WTC11 (cell line): ENCODE measurements at regions of chr5 and their contacts with region 1.

Region 1: DNA sequence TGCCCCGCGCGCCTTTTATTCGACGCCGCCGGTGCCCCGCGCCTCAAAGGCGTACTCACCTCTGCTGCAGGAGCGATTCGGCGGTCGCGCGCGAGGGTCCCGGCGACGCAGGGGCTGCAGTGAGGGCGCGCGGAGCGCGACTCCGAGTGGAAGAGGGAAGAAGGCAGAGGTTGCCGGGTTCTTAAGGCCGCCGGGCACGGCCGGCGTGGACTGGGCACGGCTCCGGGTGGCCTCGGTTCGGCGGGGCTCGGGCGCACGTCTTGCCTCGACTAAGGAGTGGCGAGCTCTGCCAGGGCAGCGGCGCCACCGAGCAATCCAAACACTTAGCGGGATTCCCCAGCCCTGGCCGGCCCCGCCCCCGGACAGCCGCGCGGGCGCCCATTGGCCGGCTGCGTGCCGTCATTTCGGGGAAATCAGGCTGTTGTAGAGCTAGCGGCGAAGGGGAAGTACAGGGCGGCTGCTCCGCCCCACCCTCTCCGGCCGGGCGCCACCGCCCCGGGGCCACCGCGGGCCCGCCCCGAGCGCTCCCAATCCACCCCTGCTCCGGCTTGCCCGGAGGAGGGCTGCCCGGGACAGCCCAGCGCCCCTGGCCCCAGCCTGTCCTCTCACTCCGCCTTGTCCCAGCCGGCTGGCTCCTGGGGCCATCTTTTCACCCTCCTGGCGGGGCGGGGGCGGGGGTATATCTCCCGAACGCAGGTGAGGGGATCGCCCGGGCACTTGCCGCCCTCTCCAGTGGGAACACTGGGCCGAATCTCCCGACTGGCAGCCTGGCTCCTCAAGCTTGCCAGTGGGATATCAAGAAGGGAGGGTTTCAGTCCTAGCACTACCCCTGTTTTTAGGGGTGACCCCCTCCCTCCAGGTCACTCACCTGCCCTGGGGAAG is at the start of gene IRF1:
- DNase-seq: peak; percentile 93
- ATAC-seq: peak; percentile 89
- H3K4me3 Mint-ChIP-seq: peak within 1 kb of the TSS; percentile 83
- H3K27ac Mint-ChIP-seq: no peak within 1 kb of the TSS
- H3K4me1 Mint-ChIP-seq: peaks cover 27% of the 10 kb centered on the region
- H3K27me3 Mint-ChIP-seq: peaks cover 33% of the 10 kb centered on the region
- CTCF ChIP-seq: no peak
- total RNA-seq, gene IRF1: 8.8 to 9.8 TPM (median 9.4 TPM) in 3 replicates

Region 2: DNA sequence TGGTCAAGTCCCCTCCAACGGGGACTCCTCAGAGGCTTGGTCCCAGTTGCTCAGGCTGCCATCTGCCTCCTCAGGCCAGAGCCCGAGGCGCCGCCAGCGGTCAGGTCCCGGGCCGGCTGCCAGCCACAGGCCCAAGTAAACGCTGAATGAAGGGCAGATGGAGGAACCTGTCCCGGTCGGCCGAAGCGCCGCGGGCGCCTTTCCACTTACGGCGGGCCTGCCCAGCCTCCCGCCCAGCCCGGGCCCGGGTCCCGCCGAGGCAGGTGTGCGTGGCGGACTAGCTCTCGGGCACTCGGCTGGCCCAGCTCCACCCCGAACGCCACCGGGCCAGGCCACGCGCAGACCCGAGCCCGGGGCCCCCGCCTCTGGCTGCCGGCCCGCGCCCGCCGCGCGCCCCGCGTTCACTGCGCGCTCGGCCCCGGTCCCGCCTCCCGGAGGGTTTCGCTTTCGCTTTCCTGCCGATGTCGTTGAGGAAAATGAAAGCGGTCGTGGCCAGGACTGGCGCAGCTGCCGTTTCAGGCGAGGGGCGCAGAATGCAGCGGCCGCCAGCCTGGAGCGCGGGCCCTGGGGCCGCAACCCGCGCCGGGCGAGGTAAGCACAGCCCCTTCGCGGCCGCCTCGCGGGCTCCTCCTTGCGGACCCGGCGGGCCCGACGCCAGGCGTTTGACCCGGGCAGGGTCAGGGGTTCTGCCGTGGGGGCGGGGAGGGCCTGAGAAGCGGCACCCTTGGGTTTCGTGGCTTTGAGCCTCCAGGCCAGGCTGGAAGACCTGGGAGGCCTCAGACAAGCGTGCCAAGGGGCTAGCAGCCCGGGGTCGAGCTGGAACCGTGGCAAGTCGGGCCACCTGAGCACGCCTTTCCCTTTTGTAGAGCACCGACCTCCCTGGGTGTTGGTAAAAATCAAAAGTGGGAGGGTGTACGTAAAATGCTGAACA is 80.0 kb before region 1 on chr5:
- CTCF ChIA-PET with region 1: interaction called, 18 read pairs
- POLR2A ChIA-PET with region 1: interaction called, 3 read pairs
- DNase-seq: peak; percentile 88
- ATAC-seq: peak; percentile 98
- H3K4me3 Mint-ChIP-seq: peak overlapping the region; percentile 70
- H3K27ac Mint-ChIP-seq: peak overlapping the region; percentile 44
- H3K4me1 Mint-ChIP-seq: peaks cover 8% of the 10 kb centered on the region
- H3K27me3 Mint-ChIP-seq: peaks cover 5% of the 10 kb centered on the region
- CTCF ChIP-seq: peak; percentile 56

Region 3: GRCh38 chr5:132419502-132420468 is 70.9 kb before region 1 on chr5:
- CTCF ChIA-PET with region 1: interaction called, 11 read pairs
- POLR2A ChIA-PET with region 1: interaction called, 3 read pairs
- DNase-seq: peak; percentile 77
- ATAC-seq: peak; percentile 92
- H3K4me3 Mint-ChIP-seq: no peak overlapping the region
- H3K27ac Mint-ChIP-seq: peak overlapping the region; percentile 67; the same call in 1 of the 2 replicates
- H3K4me1 Mint-ChIP-seq: peaks cover 20% of the 10 kb centered on the region
- H3K27me3 Mint-ChIP-seq: no peaks in the 10 kb centered on the region; the same call in 1 of the 2 replicates
- CTCF ChIP-seq: peak; percentile 86

Region 4: GRCh38 chr5:132426525-132427138 is 64.1 kb before region 1 on chr5:
- CTCF ChIA-PET with region 1: interaction called, 19 read pairs
- POLR2A ChIA-PET with region 1: interaction called, 8 read pairs
- DNase-seq: peak; percentile 41
- ATAC-seq: peak; percentile 85
- H3K4me3 Mint-ChIP-seq: no peak overlapping the region
- H3K27ac Mint-ChIP-seq: no peak overlapping the region
- H3K4me1 Mint-ChIP-seq: peaks cover 18% of the 10 kb centered on the region
- H3K27me3 Mint-ChIP-seq: no peaks in the 10 kb centered on the region
- CTCF ChIP-seq: no peak

Region 5: DNA sequence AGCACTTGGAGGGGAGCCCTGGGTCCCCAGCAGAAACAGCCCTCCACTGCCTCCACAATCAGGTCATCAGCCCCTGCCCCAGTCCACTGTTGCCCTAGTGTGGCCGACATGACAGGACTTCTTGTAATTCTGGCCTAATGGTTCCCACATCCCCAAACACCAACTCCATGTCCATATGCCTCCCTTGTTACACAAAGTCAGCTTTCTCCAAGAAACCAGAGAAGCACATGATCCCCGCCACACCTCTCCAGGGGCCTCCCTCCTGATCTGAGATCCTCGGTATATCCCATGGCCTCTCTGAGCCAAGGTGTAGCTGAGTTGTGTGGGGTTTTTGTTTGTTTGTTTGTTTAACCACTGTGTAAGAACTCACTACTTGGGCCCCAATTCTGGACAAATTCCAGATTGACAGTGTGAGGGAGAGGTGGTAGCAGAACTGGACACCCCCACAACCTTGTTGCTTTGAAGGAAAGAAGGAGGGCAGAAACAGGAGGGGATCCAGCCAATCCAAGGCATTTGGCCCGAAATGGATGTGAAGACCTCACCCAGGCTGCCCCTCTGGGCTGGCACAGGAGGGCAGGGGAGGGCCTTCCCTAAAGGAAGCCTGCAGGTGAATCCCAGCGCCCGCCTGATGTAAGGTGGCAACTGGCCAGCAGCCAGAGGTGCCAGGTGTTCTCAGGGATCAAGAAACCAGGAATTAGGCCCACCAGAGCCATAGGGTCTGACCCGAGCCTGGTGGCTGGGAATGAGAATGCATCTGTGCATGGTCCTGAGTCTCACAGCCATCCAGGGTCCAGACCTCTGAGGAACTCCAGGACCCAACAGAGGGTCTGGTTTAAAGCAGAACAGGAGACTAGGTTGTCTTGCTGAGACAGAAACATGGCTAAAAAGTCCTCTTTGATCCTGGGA is 13.6 kb before region 1 on chr5:
- CTCF ChIA-PET with region 1: interaction called, 11 read pairs
- POLR2A ChIA-PET with region 1: interaction called, 13 read pairs
- DNase-seq: no peak
- ATAC-seq: peak; percentile 63
- H3K4me3 Mint-ChIP-seq: no peak overlapping the region
- H3K27ac Mint-ChIP-seq: no peak overlapping the region
- H3K4me1 Mint-ChIP-seq: peaks cover 10% of the 10 kb centered on the region
- H3K27me3 Mint-ChIP-seq: no peaks in the 10 kb centered on the region
- CTCF ChIP-seq: no peak